Activated CD8-positive, alpha-beta T cell treated with anti-CD3 and anti-CD28 coated beads, Interleukin-2, amount 10 ng/mL, durations not matched to agents 7 days and 5 days (primary cell): ENCODE measurements at regions of chr1 and their contacts with region 1.

Region 1: DNA sequence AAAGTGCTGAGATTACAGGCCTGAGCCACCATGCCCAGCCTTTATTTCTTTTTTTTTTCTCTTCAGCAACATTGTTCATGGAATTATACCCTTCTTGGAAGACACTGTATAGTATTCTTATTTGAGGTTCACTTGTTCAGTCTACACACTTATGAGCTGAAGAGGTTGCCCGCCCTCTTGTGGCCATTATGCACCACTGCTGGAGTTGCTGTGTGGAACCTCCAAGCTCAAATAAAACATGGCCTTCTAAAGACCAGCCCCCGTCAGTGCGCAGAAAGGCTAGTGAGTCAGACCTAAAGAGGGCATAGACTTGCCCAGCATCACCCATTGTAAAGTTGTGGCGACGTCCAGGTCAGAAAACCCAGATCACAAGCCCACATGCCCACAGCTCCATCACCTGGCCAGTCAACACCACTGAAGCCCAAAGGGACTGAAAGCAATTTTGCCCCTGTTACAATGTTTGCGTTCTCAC is 20.4 kb downstream of the LURAP1 start:
- DNase-seq: peak; percentile 80
- ATAC-seq: peak; percentile 95
- H3K4me3 Mint-ChIP-seq: no peak overlapping the region
- H3K27ac Mint-ChIP-seq: no peak overlapping the region
- H3K4me1 Mint-ChIP-seq: peaks cover 1% of the 10 kb centered on the region
- H3K27me3 Mint-ChIP-seq: no peaks in the 10 kb centered on the region

Region 2: GRCh38 chr1:46036894-46037839 is 186.3 kb before region 1 on chr1:
- CTCF ChIA-PET with region 1: interaction called, 25 read pairs
- POLR2A ChIA-PET with region 1: no interaction called
- DNase-seq: peak; percentile 88
- ATAC-seq: peak; percentile 80
- H3K4me3 Mint-ChIP-seq: no peak overlapping the region
- H3K27ac Mint-ChIP-seq: no peak overlapping the region
- H3K4me1 Mint-ChIP-seq: no peaks in the 10 kb centered on the region
- H3K27me3 Mint-ChIP-seq: no peaks in the 10 kb centered on the region

Region 3: DNA sequence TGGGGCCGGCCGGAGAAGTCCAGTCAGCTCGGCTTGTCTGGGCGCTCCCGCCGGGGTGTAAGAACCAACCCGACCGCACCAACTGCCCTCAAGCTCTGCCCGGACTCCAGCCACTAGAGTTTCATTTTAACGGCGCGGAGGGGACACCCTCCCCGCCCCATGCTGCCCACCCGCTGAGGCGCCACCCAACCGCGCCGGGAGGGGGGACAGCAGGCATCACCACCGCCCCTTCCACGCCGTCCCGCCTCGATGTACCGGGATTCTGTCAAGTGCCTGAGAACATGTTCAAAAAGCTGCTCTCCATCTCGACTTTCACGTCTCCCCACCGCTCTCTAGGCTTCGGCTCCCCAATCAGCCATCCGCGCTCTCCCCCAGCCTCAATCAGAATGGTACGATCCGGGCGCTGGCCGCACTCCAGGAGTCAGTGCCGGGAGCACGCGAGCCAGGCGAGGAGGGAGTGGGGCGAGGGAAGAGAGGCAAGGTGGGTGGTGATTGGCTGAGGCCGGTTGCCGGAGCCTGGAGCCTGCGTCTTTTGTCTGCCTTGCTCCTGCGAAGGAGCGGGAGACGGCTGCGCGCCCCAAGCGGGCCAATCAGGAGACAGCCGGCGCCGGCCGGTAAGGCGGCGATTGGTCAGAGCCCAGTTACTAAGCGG is 90.9 kb before region 1 on chr1 and contains the start of gene PIK3R3:
- CTCF ChIA-PET with region 1: interaction called, 10 read pairs
- POLR2A ChIA-PET with region 1: no interaction called
- DNase-seq: peak; percentile 95
- ATAC-seq: peak; percentile 97
- H3K4me3 Mint-ChIP-seq: peak within 1 kb of the TSS; percentile 93
- H3K27ac Mint-ChIP-seq: peak within 1 kb of the TSS; percentile 98
- H3K4me1 Mint-ChIP-seq: peaks cover 30% of the 10 kb centered on the region
- H3K27me3 Mint-ChIP-seq: peaks cover 57% of the 10 kb centered on the region
- total RNA-seq, gene PIK3R3: 4.8 to 5.4 TPM

Region 4: GRCh38 chr1:46197964-46198811 is 25.3 kb before region 1 on chr1 and contains the start of gene POMGNT1:
- CTCF ChIA-PET with region 1: interaction called, 16 read pairs
- POLR2A ChIA-PET with region 1: interaction called, 3 read pairs
- DNase-seq: peak; percentile 80
- ATAC-seq: peak; percentile 97
- H3K4me3 Mint-ChIP-seq: peak within 1 kb of the TSS; percentile 83
- H3K27ac Mint-ChIP-seq: peak within 1 kb of the TSS; percentile 82
- H3K4me1 Mint-ChIP-seq: peaks cover 20% of the 10 kb centered on the region
- H3K27me3 Mint-ChIP-seq: peaks cover 2% of the 10 kb centered on the region
- total RNA-seq, gene POMGNT1: 25.2 to 28.4 TPM

Region 5: GRCh38 chr1:46236882-46237281 is 13.4 kb after region 1 on chr1:
- CTCF ChIA-PET with region 1: interaction called, 33 read pairs
- POLR2A ChIA-PET with region 1: no interaction called
- DNase-seq: no peak
- ATAC-seq: no peak
- H3K4me3 Mint-ChIP-seq: no peak overlapping the region
- H3K27ac Mint-ChIP-seq: no peak overlapping the region
- H3K4me1 Mint-ChIP-seq: peaks cover 4% of the 10 kb centered on the region
- H3K27me3 Mint-ChIP-seq: no peaks in the 10 kb centered on the region

Region 6: GRCh38 chr1:46442317-46443161 is 219.0 kb after region 1 on chr1:
- CTCF ChIA-PET with region 1: no interaction called
- POLR2A ChIA-PET with region 1: no interaction called
- DNase-seq: peak; percentile 77
- ATAC-seq: peak; percentile 79
- H3K4me3 Mint-ChIP-seq: peak overlapping the region; percentile 77
- H3K27ac Mint-ChIP-seq: peak overlapping the region; percentile 17
- H3K4me1 Mint-ChIP-seq: peaks cover 10% of the 10 kb centered on the region
- H3K27me3 Mint-ChIP-seq: peaks cover 26% of the 10 kb centered on the region